ENCODE measurements at regions of chr4 and their contacts with region 1.

Region 1: GRCh38 chr4:73653695-73654106 is 33.5 kb upstream of the RASSF6 start:
- DNase-seq: peak in 3 of 7 donors; percentile 23 to 41 (median 24)
- H3K4me3 ChIP-seq: no peak overlapping the region
- H3K27ac ChIP-seq: no peak overlapping the region
- H3K4me1 ChIP-seq: no peaks in the 10 kb centered on the region
- H3K27me3 ChIP-seq: peaks cover 2% of the 10 kb centered on the region
- CTCF ChIP-seq: peak; percentile 32 to 77 (median 60)
- POLR2A ChIP-seq: no peak

Region 2: DNA sequence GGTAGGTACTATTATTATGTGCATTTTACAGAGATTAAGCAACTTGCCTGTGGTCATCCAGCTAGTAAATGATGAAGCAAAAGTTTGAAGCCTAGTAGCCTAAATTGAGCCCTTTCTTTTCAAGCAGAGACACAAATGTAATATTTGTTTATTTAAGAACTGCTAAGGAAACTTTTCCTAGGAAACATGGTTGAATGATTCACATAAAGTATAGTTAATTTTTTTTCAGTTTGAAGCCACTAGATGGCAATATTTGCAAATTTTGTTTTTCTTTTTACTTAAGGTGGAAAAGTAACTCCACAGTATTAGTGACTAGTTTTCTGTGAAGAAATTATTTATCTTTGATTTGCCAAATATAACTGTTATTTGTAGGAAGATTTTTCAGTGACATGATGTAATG is 342.3 kb before region 1 on chr4:
- intact Hi-C with region 1: loop called in 1 of 2 experiments (anchors 5 kb)
- DNase-seq: no peak
- H3K4me3 ChIP-seq: no peak overlapping the region
- H3K27ac ChIP-seq: no peak overlapping the region
- H3K4me1 ChIP-seq: no peaks in the 10 kb centered on the region
- H3K27me3 ChIP-seq: no peaks in the 10 kb centered on the region
- CTCF ChIP-seq: peak in 5 of 6 experiments; percentile 25 to 53 (median 41)
- POLR2A ChIP-seq: no peak

Region 3: GRCh38 chr4:73573794-73574406 is 79.8 kb before region 1 on chr4:
- intact Hi-C with region 1: loop called in 1 of 2 experiments (anchors 10 kb)
- DNase-seq: peak; percentile 32 to 69 (median 41)
- H3K4me3 ChIP-seq: no peak overlapping the region
- H3K27ac ChIP-seq: no peak overlapping the region
- H3K4me1 ChIP-seq: no peaks in the 10 kb centered on the region
- H3K27me3 ChIP-seq: no peaks in the 10 kb centered on the region
- CTCF ChIP-seq: peak; percentile 31 to 64 (median 52)
- POLR2A ChIP-seq: no peak

Measured in adrenal gland (tissue), 19 donors.